CD4-positive, alpha-beta T cell (primary cell): ENCODE measurements at regions of chr16 and their contacts with region 1.

Region 1: DNA sequence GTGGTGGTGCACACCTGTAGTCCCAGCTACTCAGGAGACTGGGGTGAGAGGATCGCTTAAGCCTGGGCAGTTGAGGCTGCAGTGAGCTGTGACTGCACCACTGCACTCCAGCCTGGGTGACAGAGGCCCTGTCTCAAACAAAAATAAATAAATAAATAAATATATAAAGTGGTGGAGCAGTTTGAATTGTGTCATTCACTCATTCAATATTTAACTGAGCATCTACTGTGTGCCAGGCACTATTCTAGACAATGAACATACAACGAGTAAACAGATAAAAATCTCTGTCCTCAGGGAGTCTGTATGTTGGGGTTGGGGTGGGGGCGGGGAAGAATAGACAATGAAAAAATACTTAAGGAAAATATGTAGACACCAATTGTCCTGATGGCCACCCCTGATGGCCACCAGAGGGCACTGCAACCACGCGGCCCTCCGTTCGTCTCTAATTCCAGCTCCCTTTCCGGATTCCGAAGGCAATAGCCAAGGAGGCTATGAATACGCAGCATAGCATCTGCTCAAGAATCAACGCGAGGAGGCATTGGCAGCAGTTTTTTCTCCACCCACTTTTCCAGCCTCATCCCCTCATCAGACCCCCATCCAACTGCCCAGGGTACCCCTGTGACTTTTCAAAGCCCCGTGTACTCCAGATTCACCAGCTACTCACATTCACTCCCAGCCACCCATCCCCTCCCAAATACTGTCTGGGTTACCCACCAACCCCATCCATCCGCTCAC is 21.4 kb downstream of the QPRT start:
- DNase-seq: peak; percentile 66 to 91 (median 74)
- ATAC-seq: peak; percentile 19
- H3K4me3 ChIP-seq: no peak overlapping the region
- H3K4me3 Mint-ChIP-seq: peak overlapping the region; percentile 76
- H3K27ac ChIP-seq: peak overlapping the region in 1 of 2 donors; percentile 81
- H3K27ac Mint-ChIP-seq: peak overlapping the region; percentile 94
- H3K4me1 ChIP-seq: peaks cover 41% of the 10 kb centered on the region
- H3K4me1 Mint-ChIP-seq: peaks cover 40% of the 10 kb centered on the region
- H3K27me3 ChIP-seq: no peaks in the 10 kb centered on the region
- H3K27me3 Mint-ChIP-seq: no peaks in the 10 kb centered on the region
- CTCF ChIP-seq: peak; percentile 93

Region 2: DNA sequence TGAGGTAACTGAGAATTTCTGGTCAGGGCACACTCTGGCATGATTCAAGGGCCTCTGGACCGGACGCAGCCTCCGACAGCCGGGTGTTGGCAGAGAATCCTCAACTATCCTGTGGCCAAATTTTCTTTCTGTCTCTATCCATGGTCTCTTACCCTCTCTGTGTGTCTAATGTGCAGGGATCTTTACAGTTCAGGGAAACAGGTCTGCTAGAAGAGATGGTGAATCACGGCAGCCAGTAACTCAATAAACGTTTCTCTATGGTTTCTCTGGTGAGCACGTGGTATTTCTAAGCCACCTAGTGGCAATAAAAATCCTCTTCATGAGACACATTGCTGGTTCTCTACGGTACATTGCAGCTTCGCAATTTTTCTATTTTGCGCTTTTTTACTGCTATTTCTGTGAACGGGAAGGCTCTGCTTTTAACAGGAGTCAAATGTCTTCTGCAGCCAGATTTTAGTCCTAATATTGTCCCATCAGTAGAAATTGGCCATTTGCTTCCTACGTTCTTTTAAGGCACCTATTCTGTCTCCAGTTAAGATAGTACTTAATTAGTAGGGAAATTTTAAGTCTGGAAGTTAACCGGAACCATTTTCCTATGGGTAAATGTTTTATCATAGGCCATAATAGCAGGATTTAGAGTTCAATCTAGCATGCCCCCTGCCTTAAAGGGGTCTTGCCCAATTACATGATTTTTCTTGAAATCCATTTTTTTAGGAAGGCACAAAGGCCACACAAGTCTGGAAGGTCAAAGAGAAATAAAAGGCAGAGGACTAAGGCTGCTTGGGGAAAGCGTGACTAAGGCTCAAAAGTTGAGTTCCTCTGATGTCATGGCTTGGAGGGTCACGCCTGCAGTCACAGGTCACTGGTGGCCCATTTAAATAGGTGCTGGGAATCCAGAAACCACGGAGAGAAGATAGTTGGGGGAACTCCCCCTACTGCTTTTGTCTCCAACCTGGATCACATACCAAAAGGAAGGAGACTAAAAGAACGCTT is 10.1 kb after region 1 on chr16:
- CTCF ChIA-PET with region 1: interaction called, 27 read pairs
- POLR2A ChIA-PET with region 1: interaction called, 41 read pairs
- intact Hi-C with region 1: loop called (anchors 1 kb)
- DNase-seq: peak in 7 of 14 experiments; percentile 11 to 84 (median 63)
- ATAC-seq: peak; percentile 100
- H3K4me3 ChIP-seq: no peak overlapping the region
- H3K4me3 Mint-ChIP-seq: no peak overlapping the region
- H3K27ac ChIP-seq: no peak overlapping the region
- H3K27ac Mint-ChIP-seq: peak overlapping the region; percentile 35
- H3K4me1 ChIP-seq: peaks cover 9% of the 10 kb centered on the region
- H3K4me1 Mint-ChIP-seq: peaks cover 11% of the 10 kb centered on the region
- H3K27me3 ChIP-seq: no peaks in the 10 kb centered on the region
- H3K27me3 Mint-ChIP-seq: no peaks in the 10 kb centered on the region
- CTCF ChIP-seq: peak; percentile 74

Region 3: DNA sequence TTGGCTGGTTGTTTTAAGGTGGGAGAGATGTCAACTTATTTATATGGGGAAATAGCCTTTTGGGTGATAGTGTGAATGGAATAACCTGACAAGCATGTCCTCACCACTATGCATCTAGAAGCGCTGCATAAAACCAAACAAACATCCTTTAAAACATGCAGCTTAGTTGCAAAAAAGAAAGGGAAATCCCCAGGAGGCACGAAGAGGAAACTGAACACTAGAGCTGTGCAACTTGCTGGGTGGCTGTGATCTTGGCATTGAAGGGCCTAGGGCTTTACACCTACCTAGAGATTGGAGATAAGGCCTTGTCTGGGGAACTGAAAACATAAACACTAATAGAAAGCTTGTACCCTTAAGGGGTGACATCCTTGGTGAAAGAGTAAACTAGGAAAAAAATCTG is 38.1 kb after region 1 on chr16:
- CTCF ChIA-PET with region 1: interaction called, 10 read pairs
- POLR2A ChIA-PET with region 1: interaction called, 24 read pairs
- intact Hi-C with region 1: loop called in 1 of 2 experiments (anchors 5 kb)
- DNase-seq: peak in 13 of 14 experiments; percentile 37 to 91 (median 52)
- ATAC-seq: peak; percentile 90
- H3K4me3 ChIP-seq: no peak overlapping the region
- H3K4me3 Mint-ChIP-seq: peak overlapping the region; percentile 43
- H3K27ac ChIP-seq: peak overlapping the region; percentile 60 to 87
- H3K27ac Mint-ChIP-seq: peak overlapping the region; percentile 98
- H3K4me1 ChIP-seq: peaks cover 81% of the 10 kb centered on the region
- H3K4me1 Mint-ChIP-seq: peaks cover 85% of the 10 kb centered on the region
- H3K27me3 ChIP-seq: no peaks in the 10 kb centered on the region
- H3K27me3 Mint-ChIP-seq: no peaks in the 10 kb centered on the region
- CTCF ChIP-seq: no peak

Region 4: DNA sequence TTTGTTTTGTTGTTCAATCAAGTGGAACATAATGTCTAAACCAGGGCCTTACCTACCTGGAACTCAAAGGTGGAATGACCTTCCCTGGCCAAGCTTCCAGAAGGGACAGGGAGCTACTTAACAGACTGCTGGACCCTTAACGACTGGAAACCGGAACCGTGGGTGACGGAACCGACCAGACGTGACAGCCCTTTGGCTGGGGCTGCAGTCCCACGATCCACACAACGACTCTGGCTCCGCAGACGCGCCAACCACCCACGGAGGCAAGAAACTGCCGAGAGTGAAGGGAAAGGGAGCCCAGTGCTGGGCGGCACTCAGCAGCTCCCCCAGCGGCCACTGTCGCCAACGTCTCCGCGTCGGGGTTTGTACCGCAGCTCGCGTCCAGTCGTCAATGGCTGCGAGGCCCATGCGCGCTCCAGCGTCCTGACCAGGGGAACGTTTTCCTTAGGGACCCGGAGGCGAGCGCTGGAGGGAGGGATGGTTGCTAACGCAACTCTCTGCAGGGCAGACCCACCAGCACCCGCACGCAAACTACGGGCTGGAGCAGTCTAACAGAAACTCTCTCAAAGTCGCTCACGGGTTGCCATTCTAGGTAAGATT is 84.6 kb after region 1 on chr16:
- CTCF ChIA-PET with region 1: interaction called, 60 read pairs
- POLR2A ChIA-PET with region 1: interaction called, 102 read pairs
- intact Hi-C with region 1: loop called (anchors 1 kb)
- DNase-seq: peak; percentile 55 to 87 (median 74)
- ATAC-seq: peak; percentile 91
- H3K4me3 ChIP-seq: peak overlapping the region; percentile 40
- H3K4me3 Mint-ChIP-seq: peak overlapping the region; percentile 80
- H3K27ac ChIP-seq: no peak overlapping the region
- H3K27ac Mint-ChIP-seq: peak overlapping the region; percentile 18
- H3K4me1 ChIP-seq: peaks cover 25% of the 10 kb centered on the region
- H3K4me1 Mint-ChIP-seq: peaks cover 33% of the 10 kb centered on the region
- H3K27me3 ChIP-seq: no peaks in the 10 kb centered on the region
- H3K27me3 Mint-ChIP-seq: no peaks in the 10 kb centered on the region
- CTCF ChIP-seq: peak; percentile 85

Region 5: DNA sequence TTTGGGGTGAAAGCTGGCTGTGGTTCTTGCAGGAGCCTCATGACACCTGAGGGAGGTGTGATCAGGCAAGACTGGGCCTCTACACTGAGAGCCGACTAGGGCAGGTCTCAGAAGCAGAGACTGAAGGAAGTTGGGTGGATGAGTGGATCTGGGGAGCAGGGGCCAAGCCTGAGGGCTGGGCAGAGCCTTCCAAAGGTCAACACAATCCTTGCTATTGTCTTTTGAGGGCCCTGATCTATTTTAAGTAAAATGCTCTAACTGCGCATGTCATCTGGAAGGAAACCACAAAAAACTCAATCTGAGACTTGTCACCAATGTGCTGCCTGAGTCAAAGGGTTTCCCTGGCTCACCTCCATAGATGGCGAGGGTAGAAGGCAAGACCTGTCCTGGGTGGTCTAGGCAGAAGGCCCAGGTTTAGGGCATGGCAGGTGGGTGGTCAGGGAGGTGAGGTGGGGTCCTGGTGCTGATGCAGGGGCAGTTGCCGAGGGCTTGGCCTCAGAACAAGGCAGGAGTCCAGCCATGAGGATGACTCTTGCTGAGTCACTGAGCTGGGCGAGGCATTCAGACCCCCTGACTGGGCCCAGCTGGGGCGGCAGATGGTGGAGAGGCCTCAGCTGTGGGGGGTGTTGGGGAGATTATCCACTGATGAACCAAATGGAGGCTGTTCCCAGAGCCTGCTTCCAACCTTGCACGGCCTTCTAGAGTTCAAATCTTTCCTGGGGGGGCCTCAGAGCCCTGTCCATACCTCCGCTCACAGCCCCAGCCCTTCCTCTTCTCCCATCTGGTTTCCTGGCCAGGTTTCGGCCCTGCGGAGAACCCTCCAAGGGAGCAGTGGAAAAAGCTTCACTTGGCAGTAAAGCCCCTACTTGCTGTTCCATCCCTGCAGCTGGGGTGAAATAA is 125.0 kb after region 1 on chr16:
- CTCF ChIA-PET with region 1: interaction called, 5 read pairs
- POLR2A ChIA-PET with region 1: interaction called, 30 read pairs
- intact Hi-C with region 1: no loop called
- DNase-seq: peak in 6 of 14 experiments; percentile 18 to 64 (median 48)
- ATAC-seq: peak; percentile 22
- H3K4me3 ChIP-seq: peak overlapping the region; percentile 13
- H3K4me3 Mint-ChIP-seq: peak overlapping the region; percentile 84
- H3K27ac ChIP-seq: peak overlapping the region; percentile 14 to 40
- H3K27ac Mint-ChIP-seq: peak overlapping the region; percentile 83
- H3K4me1 ChIP-seq: peaks cover 100% of the 10 kb centered on the region
- H3K4me1 Mint-ChIP-seq: peaks cover 79% of the 10 kb centered on the region
- H3K27me3 ChIP-seq: no peaks in the 10 kb centered on the region
- H3K27me3 Mint-ChIP-seq: no peaks in the 10 kb centered on the region
- CTCF ChIP-seq: no peak

Region 6: GRCh38 chr16:29836623-29837022 is 136.2 kb after region 1 on chr16:
- CTCF ChIA-PET with region 1: no interaction called
- POLR2A ChIA-PET with region 1: no interaction called
- intact Hi-C with region 1: no loop called
- DNase-seq: no peak
- ATAC-seq: no peak
- H3K4me3 ChIP-seq: no peak overlapping the region
- H3K4me3 Mint-ChIP-seq: no peak overlapping the region
- H3K27ac ChIP-seq: no peak overlapping the region
- H3K27ac Mint-ChIP-seq: peak overlapping the region; percentile 27
- H3K4me1 ChIP-seq: no peaks in the 10 kb centered on the region
- H3K4me1 Mint-ChIP-seq: no peaks in the 10 kb centered on the region
- H3K27me3 ChIP-seq: no peaks in the 10 kb centered on the region
- H3K27me3 Mint-ChIP-seq: no peaks in the 10 kb centered on the region
- CTCF ChIP-seq: no peak

Region 7: GRCh38 chr16:29983420-29984136 is 283.2 kb after region 1 on chr16:
- CTCF ChIA-PET with region 1: no interaction called
- POLR2A ChIA-PET with region 1: no interaction called
- intact Hi-C with region 1: no loop called
- DNase-seq: no peak
- ATAC-seq: no peak
- H3K4me3 ChIP-seq: no peak overlapping the region
- H3K4me3 Mint-ChIP-seq: no peak overlapping the region
- H3K27ac ChIP-seq: no peak overlapping the region
- H3K27ac Mint-ChIP-seq: no peak overlapping the region
- H3K4me1 ChIP-seq: no peaks in the 10 kb centered on the region
- H3K4me1 Mint-ChIP-seq: no peaks in the 10 kb centered on the region
- H3K27me3 ChIP-seq: no peaks in the 10 kb centered on the region
- H3K27me3 Mint-ChIP-seq: no peaks in the 10 kb centered on the region
- CTCF ChIP-seq: no peak

Region 8: GRCh38 chr16:30005341-30006094 is 305.1 kb after region 1 on chr16:
- CTCF ChIA-PET with region 1: interaction called, 3 read pairs
- POLR2A ChIA-PET with region 1: interaction called, 3 read pairs
- intact Hi-C with region 1: loop called in 1 of 2 experiments (anchors 5 kb)
- DNase-seq: peak in 11 of 14 experiments; percentile 27 to 71 (median 36)
- ATAC-seq: peak; percentile 89
- H3K4me3 ChIP-seq: no peak overlapping the region
- H3K4me3 Mint-ChIP-seq: no peak overlapping the region
- H3K27ac ChIP-seq: no peak overlapping the region
- H3K27ac Mint-ChIP-seq: no peak overlapping the region
- H3K4me1 ChIP-seq: peaks cover 18% of the 10 kb centered on the region
- H3K4me1 Mint-ChIP-seq: peaks cover 15% of the 10 kb centered on the region
- H3K27me3 ChIP-seq: peaks cover 8 to 10% of the 10 kb centered on the region in 2 experiments
- H3K27me3 Mint-ChIP-seq: peaks cover 13% of the 10 kb centered on the region
- CTCF ChIP-seq: peak; percentile 65